ENCODE measurements at regions of chr1 and their contacts with region 1.

Region 1: DNA sequence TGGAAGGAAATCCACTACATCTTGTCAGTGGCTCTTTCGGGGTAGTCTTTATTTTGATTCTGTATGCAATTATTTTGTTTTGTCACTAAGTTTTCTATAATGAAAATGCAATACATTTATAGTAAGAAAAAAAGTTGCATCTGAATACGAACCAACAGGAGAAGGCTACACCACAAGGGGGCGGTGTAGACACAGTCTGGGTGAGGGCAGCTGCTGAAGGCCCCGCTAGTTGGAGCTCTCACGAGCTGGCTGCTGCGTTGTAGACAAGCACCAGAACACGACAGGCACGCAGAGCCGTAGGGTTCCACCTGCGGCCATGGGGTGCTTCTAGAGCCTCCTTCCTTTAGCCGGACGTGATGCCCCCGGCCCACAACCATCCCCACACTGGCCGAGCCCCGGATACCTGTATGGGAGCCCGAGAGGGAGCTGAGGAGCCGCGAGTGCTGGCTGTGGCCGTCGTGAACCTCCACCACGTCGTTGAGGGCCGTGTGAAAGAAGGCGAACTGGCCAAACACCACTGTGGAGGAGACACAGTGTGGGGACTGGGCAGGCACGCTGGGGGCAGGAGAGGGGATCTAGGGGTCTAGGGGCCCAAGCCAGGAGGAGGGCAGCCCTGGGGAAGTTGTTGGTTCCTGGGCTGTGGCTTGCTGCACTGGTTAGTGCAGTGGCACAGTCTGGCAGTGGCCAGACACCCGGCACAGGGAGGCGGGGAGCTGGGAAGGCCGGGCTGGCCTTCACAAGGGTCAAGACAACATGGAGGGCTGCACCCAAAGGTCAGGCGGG is 160.8 kb downstream of the ZSCAN20 start:
- DNase-seq: peak; percentile 79
- ATAC-seq: peak; percentile 80
- H3K4me3 ChIP-seq: no peak overlapping the region
- H3K4me3 Mint-ChIP-seq: no peak overlapping the region
- H3K27ac ChIP-seq: no peak overlapping the region
- H3K27ac Mint-ChIP-seq: no peak overlapping the region
- H3K4me1 ChIP-seq: peaks cover 0 to 2% of the 10 kb centered on the region in 2 donors
- H3K4me1 Mint-ChIP-seq: no peaks in the 10 kb centered on the region
- H3K27me3 ChIP-seq: peaks cover 0 to 9% (median 1%) of the 10 kb centered on the region in 4 experiments
- H3K27me3 Mint-ChIP-seq: peaks cover 32% of the 10 kb centered on the region
- CTCF ChIP-seq: peak; percentile 92

Region 2: DNA sequence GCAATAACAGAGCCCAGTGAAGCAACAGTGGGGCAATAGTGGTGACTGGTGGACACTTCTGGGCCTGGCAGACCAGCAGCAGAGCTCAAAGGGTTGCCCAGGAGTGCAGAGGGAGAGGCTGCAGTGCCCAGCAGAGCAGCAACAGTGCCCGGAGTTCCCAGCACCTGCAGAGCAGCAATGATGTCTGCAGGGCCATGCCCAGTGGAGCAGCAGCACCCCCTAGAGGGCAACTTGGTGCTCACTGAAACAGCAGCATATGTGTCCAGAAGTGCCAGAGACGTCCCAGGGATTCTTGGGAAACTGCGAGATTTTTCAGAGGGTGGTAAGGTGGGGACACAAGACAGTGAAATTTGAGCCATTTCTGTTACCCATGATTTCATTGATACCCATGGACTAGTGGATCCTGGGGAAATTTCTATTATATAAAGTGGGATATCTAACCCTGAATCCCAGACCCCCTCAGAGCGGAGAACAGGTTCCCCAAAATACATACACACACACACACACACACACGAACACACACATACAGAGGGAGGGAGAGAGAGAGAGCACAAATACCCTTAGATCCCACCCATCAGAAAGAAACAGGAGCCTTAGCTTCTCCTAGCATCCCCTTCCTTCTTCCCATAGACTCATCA is 964.8 kb after region 1 on chr1:
- CTCF ChIA-PET with region 1: interaction called, 12 read pairs
- POLR2A ChIA-PET with region 1: no interaction called
- intact Hi-C with region 1: no loop called
- DNase-seq: peak; percentile 35
- ATAC-seq: peak; percentile 14
- H3K4me3 ChIP-seq: no peak overlapping the region
- H3K4me3 Mint-ChIP-seq: no peak overlapping the region
- H3K27ac ChIP-seq: no peak overlapping the region
- H3K27ac Mint-ChIP-seq: no peak overlapping the region
- H3K4me1 ChIP-seq: no peaks in the 10 kb centered on the region
- H3K4me1 Mint-ChIP-seq: no peaks in the 10 kb centered on the region
- H3K27me3 ChIP-seq: no peaks in the 10 kb centered on the region
- H3K27me3 Mint-ChIP-seq: peaks cover 14% of the 10 kb centered on the region
- CTCF ChIP-seq: peak; percentile 62

Region 3: GRCh38 chr1:34742667-34743270 is 1109.6 kb after region 1 on chr1:
- CTCF ChIA-PET with region 1: interaction called, 27 read pairs
- POLR2A ChIA-PET with region 1: no interaction called
- intact Hi-C with region 1: no loop called
- DNase-seq: peak; percentile 66
- ATAC-seq: peak; percentile 76
- H3K4me3 ChIP-seq: no peak overlapping the region
- H3K4me3 Mint-ChIP-seq: no peak overlapping the region
- H3K27ac ChIP-seq: no peak overlapping the region
- H3K27ac Mint-ChIP-seq: no peak overlapping the region
- H3K4me1 ChIP-seq: peaks cover 0 to 5% of the 10 kb centered on the region in 2 donors
- H3K4me1 Mint-ChIP-seq: peaks cover 4% of the 10 kb centered on the region
- H3K27me3 ChIP-seq: peaks cover 0 to 8% (median 0%) of the 10 kb centered on the region in 4 experiments
- H3K27me3 Mint-ChIP-seq: peaks cover 18% of the 10 kb centered on the region
- CTCF ChIP-seq: peak; percentile 93